Activated T-helper 2 cell treated with anti-CD3 and anti-CD28 coated beads, Interferon-gamma antibody, Interleukin-2, Interleukin-4, amounts not matched to agents 10 μg/mL and 5 μg/mL and 100 μg/mL, durations not matched to agents 14 hours and 24 hours and 36 hours (primary cell): ENCODE measurements at regions of chr9 and their contacts with region 1.

Region 1: GRCh38 chr9:99807276-99807852 is 14.3 kb upstream of the NR4A3 start:
- DNase-seq: peak; percentile 42
- H3K4me3 Mint-ChIP-seq: no peak overlapping the region
- H3K27ac Mint-ChIP-seq: no peak overlapping the region
- H3K4me1 Mint-ChIP-seq: peaks cover 44% of the 10 kb centered on the region
- H3K27me3 Mint-ChIP-seq: peaks cover 3% of the 10 kb centered on the region

Region 2: DNA sequence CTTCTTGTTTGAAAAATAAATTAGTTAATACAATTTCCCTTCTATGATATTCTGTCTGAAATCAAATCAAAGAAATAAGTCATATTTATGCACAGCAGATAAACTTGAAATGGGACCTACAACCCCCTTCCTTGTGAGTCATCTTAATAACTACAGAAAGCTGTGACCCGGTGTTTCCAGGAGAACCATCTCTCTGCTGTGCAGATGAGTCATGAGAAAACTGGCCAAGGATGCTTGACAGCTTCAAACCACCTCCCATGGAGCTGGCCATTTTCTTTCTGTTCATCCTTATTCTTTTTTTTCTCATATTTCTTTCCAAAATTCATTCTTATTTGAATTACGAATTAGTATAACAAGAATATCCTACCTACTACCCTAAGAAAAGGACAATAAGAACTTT is 29.1 kb before region 1 on chr9:
- intact Hi-C with region 1: loop called (anchors 2 kb)
- DNase-seq: no peak
- H3K4me3 Mint-ChIP-seq: no peak overlapping the region
- H3K27ac Mint-ChIP-seq: no peak overlapping the region
- H3K4me1 Mint-ChIP-seq: peaks cover 16% of the 10 kb centered on the region
- H3K27me3 Mint-ChIP-seq: peaks cover 13% of the 10 kb centered on the region

Region 3: GRCh38 chr9:100011062-100011681 is 203.8 kb after region 1 on chr9:
- intact Hi-C with region 1: loop called (anchors 5 kb)
- DNase-seq: no peak
- H3K4me3 Mint-ChIP-seq: no peak overlapping the region
- H3K27ac Mint-ChIP-seq: no peak overlapping the region
- H3K4me1 Mint-ChIP-seq: no peaks in the 10 kb centered on the region
- H3K27me3 Mint-ChIP-seq: no peaks in the 10 kb centered on the region